ENCODE measurements at regions of chr5 and their contacts with region 1.

Region 1: GRCh38 chr5:142748568-142749249 is 21.5 kb upstream of the ARHGAP26 start:
- DNase-seq: no peak

Region 2: GRCh38 chr5:142769741-142770631 is 21.3 kb after region 1 on chr5 and contains the start of gene ARHGAP26:
- intact Hi-C with region 1: loop called (anchors 2 kb)
- DNase-seq: peak; percentile 100
- total RNA-seq, gene ARHGAP26: 32.0 TPM

Region 3: GRCh38 chr5:142881076-142881783 is 132.5 kb after region 1 on chr5:
- intact Hi-C with region 1: loop called (anchors 2 kb)
- DNase-seq: no peak